ENCODE measurements at regions of chr10 and their contacts with region 1.

Region 1: GRCh38 chr10:110210674-110211464 is 3.5 kb downstream of the MXI1 start:
- DNase-seq: peak; percentile 98 to 99 (median 99)
- H3K4me3 ChIP-seq: peak overlapping the region; percentile 79
- H3K27ac ChIP-seq: peak overlapping the region; percentile 71 to 95
- H3K4me1 ChIP-seq: peaks cover 7% of the 10 kb centered on the region
- H3K27me3 ChIP-seq: no peaks in the 10 kb centered on the region
- CTCF ChIP-seq: no peak
- EP300 ChIP-seq: peak; percentile 23
- POLR2A ChIP-seq: peak; percentile 87

Region 2: DNA sequence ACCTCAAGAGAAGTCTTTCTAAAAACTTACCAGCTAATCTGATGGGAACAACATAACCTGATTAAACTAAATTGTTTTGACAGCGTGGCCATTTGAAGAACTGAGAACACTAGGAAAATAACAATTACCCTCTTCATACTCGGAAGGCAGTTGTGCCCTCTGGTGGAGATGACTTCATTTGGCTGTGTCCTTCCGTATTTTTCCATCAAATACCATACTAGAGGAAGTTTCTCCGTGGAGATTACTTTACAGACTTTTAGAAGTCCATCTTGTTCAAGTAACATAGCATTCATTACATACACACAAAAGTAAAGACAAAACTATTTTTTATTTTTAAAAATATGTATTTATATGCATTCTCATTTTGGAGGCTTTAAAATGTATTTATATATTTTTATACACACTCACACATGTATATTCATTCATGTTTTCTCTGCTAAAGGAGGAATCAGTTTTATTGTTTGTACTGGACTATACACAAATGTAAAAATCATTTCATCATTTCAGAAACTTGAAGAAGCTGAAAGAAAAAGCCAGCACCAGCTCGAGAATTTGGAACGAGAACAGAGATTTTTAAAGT is 68.6 kb after region 1 on chr10:
- intact Hi-C with region 1: loop called in 2 of 4 experiments (anchors 5 kb)
- DNase-seq: peak in 4 of 5 donors; percentile 29 to 72 (median 52)
- H3K4me3 ChIP-seq: no peak overlapping the region
- H3K27ac ChIP-seq: no peak overlapping the region
- H3K4me1 ChIP-seq: peaks cover 5% of the 10 kb centered on the region
- H3K27me3 ChIP-seq: no peaks in the 10 kb centered on the region
- CTCF ChIP-seq: peak; percentile 42 to 80 (median 79)
- EP300 ChIP-seq: no peak
- POLR2A ChIP-seq: no peak

Measured in ovary (tissue), 10 donors.